Vagina (tissue), 2 donors: ENCODE measurements at regions of chr4 and their contacts with region 1.

Region 1: GRCh38 chr4:145058256-145058655 is 39.7 kb downstream of the ANAPC10 start:
- DNase-seq: no peak
- H3K4me3 ChIP-seq: no peak overlapping the region
- H3K27ac ChIP-seq: no peak overlapping the region
- H3K4me1 ChIP-seq: no peaks in the 10 kb centered on the region
- H3K27me3 ChIP-seq: no peaks in the 10 kb centered on the region
- CTCF ChIP-seq: no peak
- POLR2A ChIP-seq: no peak

Region 2: DNA sequence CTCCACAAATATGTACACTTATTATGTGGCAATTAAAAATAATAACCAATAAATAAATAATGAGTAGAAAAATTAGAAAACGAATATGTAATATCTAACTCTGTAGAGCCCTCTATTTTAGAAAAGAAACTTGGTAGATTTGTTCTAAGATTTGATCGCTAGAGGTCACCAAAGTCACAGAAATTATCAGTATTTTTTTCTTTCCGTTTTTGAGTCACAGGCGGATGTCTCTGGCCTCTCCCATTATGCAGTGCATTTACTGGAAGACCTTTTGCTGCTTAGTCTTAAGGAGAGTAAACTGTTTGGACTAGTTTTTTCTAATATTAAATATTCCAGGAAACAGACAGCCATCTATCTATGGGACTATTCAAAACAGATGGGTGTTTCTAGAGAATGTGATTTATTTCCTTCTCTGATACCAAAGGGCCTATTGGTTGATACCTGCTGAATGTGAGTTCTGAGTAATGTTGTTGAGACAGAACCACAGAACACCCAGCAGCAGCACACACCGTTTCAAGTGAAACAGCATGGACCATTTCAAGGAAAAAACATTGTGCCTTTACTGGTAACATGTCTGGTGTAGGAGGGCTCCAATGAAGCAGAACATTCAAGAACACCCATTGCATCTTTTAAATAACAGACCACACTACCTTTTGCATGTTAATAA is 883.7 kb before region 1 on chr4:
- intact Hi-C with region 1: loop called (anchors 10 kb)
- DNase-seq: no peak
- H3K4me3 ChIP-seq: no peak overlapping the region
- H3K27ac ChIP-seq: no peak overlapping the region
- H3K4me1 ChIP-seq: no peaks in the 10 kb centered on the region
- H3K27me3 ChIP-seq: no peaks in the 10 kb centered on the region
- CTCF ChIP-seq: peak in 2 of 3 experiments; percentile 31 to 54
- POLR2A ChIP-seq: no peak